ENCODE measurements at regions of chr9 and their contacts with region 1.

Region 1: GRCh38 chr9:125529589-125530515 is 177.2 kb downstream of the MAPKAP1 start:
- DNase-seq: peak; percentile 57
- ATAC-seq: peak; percentile 91
- H3K4me3 ChIP-seq: no peak overlapping the region; the same call in 1 of the 2 replicates
- H3K27ac ChIP-seq: peak overlapping the region; percentile 75
- H3K4me1 ChIP-seq: peaks cover 30% of the 10 kb centered on the region
- H3K27me3 ChIP-seq: no peaks in the 10 kb centered on the region
- CTCF ChIP-seq: no peak
- EP300 ChIP-seq: no peak
- POLR2A ChIP-seq: no peak
- RAD21 ChIP-seq: no peak

Region 2: GRCh38 chr9:125447202-125447802 is 82.5 kb before region 1 on chr9:
- CTCF ChIA-PET with region 1: interaction called, 11 read pairs
- POLR2A ChIA-PET with region 1: no interaction called
- RAD21 ChIA-PET with region 1: interaction called, 3 read pairs
- SMC1A ChIA-PET with region 1: interaction called, 6 read pairs
- in situ Hi-C with region 1: no loop called
- intact Hi-C with region 1: no loop called
- DNase-seq: no peak
- ATAC-seq: peak; percentile 18; the same call in 2 of the 3 replicates
- H3K4me3 ChIP-seq: no peak overlapping the region
- H3K27ac ChIP-seq: peak overlapping the region; percentile 22; the same call in 1 of the 2 replicates
- H3K4me1 ChIP-seq: peaks cover 14% of the 10 kb centered on the region
- H3K27me3 ChIP-seq: no peaks in the 10 kb centered on the region
- CTCF ChIP-seq: no peak
- EP300 ChIP-seq: no peak
- POLR2A ChIP-seq: no peak
- RAD21 ChIP-seq: no peak

Region 3: DNA sequence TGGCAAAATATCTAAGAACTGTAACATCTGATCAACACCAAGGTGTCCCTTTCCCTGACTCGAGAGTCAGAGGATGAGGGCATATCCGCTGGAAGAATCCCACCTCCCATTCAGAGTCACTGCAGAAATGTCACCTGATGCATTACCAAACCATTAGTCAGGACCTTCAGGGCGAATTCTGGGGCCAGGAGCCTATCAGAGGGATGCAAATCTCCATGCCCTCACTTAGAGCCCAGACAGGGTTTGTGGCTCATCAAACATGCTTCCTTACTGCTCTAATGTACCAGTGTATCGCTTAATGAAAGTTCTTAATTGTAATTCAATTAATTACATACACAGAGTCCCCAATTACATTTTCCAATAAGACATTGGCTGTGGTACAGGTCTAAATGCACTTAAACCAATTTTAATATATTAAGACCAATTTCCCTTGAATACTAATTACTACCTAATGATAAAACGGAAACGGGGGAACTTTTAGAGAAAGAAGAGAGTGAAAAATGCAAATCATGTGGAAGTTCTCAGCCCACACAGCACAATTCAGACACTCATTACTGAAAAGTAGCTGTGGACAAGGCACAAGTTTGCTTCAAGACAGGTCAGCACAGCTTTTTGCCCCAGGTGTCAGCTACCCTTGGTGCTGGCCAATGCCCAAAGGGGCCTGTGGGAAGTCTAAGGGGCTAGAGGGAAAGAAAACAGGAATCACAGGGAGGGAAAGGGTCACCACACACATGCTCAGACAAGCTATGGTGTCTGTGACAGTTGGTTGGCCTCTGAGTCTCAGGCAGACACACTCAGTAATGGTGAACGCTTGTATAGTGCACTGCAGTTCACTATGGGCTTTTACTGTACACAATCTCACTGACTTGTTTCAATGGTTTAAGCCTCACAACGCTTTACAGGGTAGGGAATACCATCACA is 34.4 kb before region 1 on chr9:
- CTCF ChIA-PET with region 1: interaction called, 3 read pairs
- POLR2A ChIA-PET with region 1: interaction called, 3 read pairs
- RAD21 ChIA-PET with region 1: interaction called, 12 read pairs
- SMC1A ChIA-PET with region 1: interaction called, 11 read pairs
- in situ Hi-C with region 1: no loop called
- intact Hi-C with region 1: no loop called
- DNase-seq: peak; percentile 53
- ATAC-seq: peak; percentile 92
- H3K4me3 ChIP-seq: peak overlapping the region; percentile 34; the same call in 1 of the 2 replicates
- H3K27ac ChIP-seq: peak overlapping the region; percentile 48
- H3K4me1 ChIP-seq: peaks cover 25% of the 10 kb centered on the region
- H3K27me3 ChIP-seq: no peaks in the 10 kb centered on the region
- CTCF ChIP-seq: no peak
- EP300 ChIP-seq: peak in 1 of 2 experiments; percentile 47; a peak in 1 of 4 replicates
- POLR2A ChIP-seq: 0 out of 2 replicates have a peak, but pooled peaks have one; percentile 27
- RAD21 ChIP-seq: no peak

Region 4: DNA sequence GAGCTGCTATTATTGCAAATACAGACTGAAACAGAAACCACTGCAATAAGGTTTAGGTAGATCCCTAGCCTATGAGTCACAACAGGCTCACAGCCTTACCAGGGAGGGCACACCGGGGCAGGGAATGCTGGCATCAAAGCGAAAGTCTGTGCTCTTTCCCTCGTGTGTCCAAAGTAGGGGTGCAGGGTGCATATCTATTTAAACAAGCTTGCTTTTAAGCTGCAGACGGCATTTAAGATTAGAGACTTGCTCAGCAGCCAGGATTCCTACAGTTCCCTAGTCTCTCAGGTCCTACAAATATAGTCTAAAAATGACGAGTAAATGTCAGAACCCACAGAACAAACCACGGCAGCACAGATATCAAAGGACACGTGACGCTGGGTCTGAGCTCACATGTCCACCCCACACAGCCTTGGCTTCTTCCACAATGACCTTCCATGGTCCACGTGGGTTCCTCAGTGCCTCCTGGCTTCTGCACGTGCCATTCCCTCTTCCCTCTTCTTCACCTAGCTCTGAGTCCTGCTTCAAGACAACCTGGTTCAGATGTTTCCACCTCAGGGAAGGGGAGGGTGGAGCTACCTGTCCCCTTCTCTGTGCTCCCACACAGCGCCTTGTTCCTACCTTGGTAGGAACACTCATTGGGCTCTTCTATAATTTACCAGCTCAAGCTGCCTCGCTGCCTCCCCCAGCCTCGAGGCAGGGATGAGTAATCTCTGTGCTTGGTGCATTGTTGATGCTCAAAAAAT is 16.0 kb before region 1 on chr9:
- CTCF ChIA-PET with region 1: interaction called, 20 read pairs
- POLR2A ChIA-PET with region 1: interaction called, 15 read pairs
- RAD21 ChIA-PET with region 1: interaction called, 23 read pairs
- SMC1A ChIA-PET with region 1: interaction called, 88 read pairs
- in situ Hi-C with region 1: no loop called
- intact Hi-C with region 1: no loop called
- DNase-seq: peak; percentile 59
- ATAC-seq: peak; percentile 99
- H3K4me3 ChIP-seq: peak overlapping the region; percentile 19
- H3K27ac ChIP-seq: peak overlapping the region; percentile 67
- H3K4me1 ChIP-seq: peaks cover 15% of the 10 kb centered on the region
- H3K27me3 ChIP-seq: no peaks in the 10 kb centered on the region
- CTCF ChIP-seq: no peak
- EP300 ChIP-seq: no peak
- POLR2A ChIP-seq: no peak
- RAD21 ChIP-seq: no peak

Region 5: DNA sequence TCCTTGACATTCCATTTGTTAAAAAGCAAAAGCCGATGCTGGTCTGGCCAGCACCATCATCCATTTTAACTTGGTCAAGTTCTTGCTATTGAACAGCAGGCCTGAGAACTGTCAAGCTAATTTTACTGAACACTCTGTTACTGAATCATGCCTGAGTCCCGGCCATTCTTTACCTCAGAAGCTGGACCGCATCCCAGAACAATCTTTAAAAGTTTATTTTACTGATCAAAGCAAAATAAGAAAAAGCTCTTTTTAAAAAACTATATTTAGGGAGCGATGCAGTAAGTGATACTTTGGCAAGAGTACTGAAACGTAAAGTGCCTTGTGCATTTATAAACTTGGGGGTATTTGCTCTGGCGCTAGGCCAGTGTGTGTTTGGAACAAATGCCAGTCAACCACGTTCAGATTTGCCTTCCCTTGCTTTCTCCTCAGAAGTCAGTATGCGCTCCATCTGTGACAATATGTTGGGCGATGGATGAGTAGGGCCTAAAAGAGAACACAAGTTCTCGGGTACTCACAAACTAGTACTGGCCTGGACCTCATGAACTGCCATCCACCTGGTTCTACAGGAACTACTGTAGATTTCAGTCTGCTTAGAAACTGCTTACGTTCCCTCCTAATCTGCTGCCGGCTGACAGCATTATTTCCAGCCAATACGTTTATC is 15.3 kb after region 1 on chr9:
- CTCF ChIA-PET with region 1: interaction called, 45 read pairs
- POLR2A ChIA-PET with region 1: interaction called, 3 read pairs
- RAD21 ChIA-PET with region 1: interaction called, 12 read pairs
- SMC1A ChIA-PET with region 1: interaction called, 29 read pairs
- in situ Hi-C with region 1: no loop called
- intact Hi-C with region 1: no loop called
- DNase-seq: no peak
- ATAC-seq: no peak
- H3K4me3 ChIP-seq: no peak overlapping the region
- H3K27ac ChIP-seq: no peak overlapping the region
- H3K4me1 ChIP-seq: no peaks in the 10 kb centered on the region
- H3K27me3 ChIP-seq: no peaks in the 10 kb centered on the region
- CTCF ChIP-seq: no peak
- EP300 ChIP-seq: no peak
- POLR2A ChIP-seq: no peak
- RAD21 ChIP-seq: no peak

Region 6: GRCh38 chr9:125601961-125602360 is 72.1 kb after region 1 on chr9:
- CTCF ChIA-PET with region 1: no interaction called
- POLR2A ChIA-PET with region 1: no interaction called
- RAD21 ChIA-PET with region 1: no interaction called
- SMC1A ChIA-PET with region 1: no interaction called
- in situ Hi-C with region 1: no loop called
- intact Hi-C with region 1: no loop called
- DNase-seq: no peak
- ATAC-seq: no peak
- H3K4me3 ChIP-seq: no peak overlapping the region
- H3K27ac ChIP-seq: no peak overlapping the region
- H3K4me1 ChIP-seq: no peaks in the 10 kb centered on the region
- H3K27me3 ChIP-seq: no peaks in the 10 kb centered on the region
- CTCF ChIP-seq: peak in 1 of 3 experiments; percentile 13; a peak in 1 of 6 replicates
- EP300 ChIP-seq: no peak
- POLR2A ChIP-seq: no peak
- RAD21 ChIP-seq: peak; percentile 13; the same call in 1 of the 2 replicates